Activated CD4-positive, alpha-beta memory T cell treated with anti-CD3 and anti-CD28 coated beads for 36 hours (primary cell): ENCODE measurements at regions of chr11 and their contacts with region 1.

Region 1: GRCh38 chr11:6377902-6378639 is 12.2 kb upstream of the SMPD1 start:
- DNase-seq: no peak
- H3K4me3 Mint-ChIP-seq: no peak overlapping the region
- H3K27ac Mint-ChIP-seq: peak overlapping the region; percentile 25
- H3K4me1 Mint-ChIP-seq: peaks cover 23% of the 10 kb centered on the region
- H3K27me3 Mint-ChIP-seq: no peaks in the 10 kb centered on the region

Region 2: DNA sequence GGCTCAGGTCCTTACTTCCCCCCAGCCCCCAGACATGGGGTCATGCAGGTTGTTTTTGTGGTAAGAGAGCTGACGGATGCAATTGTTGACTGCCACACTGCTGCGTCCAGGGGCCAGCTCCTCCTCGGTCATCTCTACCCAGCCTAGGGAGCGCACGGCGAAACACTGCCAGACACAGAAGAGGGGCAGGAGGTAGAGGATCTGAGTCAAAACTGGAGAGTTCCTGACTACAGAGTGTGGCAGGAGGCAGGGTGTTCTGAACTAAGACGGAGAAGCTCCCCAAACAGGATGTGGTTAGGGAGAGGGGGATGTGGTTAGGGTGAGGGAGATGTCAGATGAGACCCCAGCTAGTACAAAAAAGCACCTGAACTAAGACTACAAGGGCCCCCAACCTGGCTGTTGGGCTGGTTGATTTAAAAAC is 24.5 kb after region 1 on chr11:
- CTCF ChIA-PET with region 1: interaction called, 36 read pairs
- POLR2A ChIA-PET with region 1: interaction called, 4 read pairs
- intact Hi-C with region 1: no loop called
- DNase-seq: peak; percentile 88
- H3K4me3 Mint-ChIP-seq: peak overlapping the region; percentile 55
- H3K27ac Mint-ChIP-seq: peak overlapping the region; percentile 90
- H3K4me1 Mint-ChIP-seq: peaks cover 71% of the 10 kb centered on the region
- H3K27me3 Mint-ChIP-seq: no peaks in the 10 kb centered on the region

Region 3: GRCh38 chr11:6431861-6432260 is 53.8 kb after region 1 on chr11:
- CTCF ChIA-PET with region 1: interaction called, 59 read pairs
- POLR2A ChIA-PET with region 1: no interaction called
- intact Hi-C with region 1: no loop called
- DNase-seq: no peak
- H3K4me3 Mint-ChIP-seq: no peak overlapping the region
- H3K27ac Mint-ChIP-seq: no peak overlapping the region
- H3K4me1 Mint-ChIP-seq: no peaks in the 10 kb centered on the region
- H3K27me3 Mint-ChIP-seq: no peaks in the 10 kb centered on the region

Region 4: DNA sequence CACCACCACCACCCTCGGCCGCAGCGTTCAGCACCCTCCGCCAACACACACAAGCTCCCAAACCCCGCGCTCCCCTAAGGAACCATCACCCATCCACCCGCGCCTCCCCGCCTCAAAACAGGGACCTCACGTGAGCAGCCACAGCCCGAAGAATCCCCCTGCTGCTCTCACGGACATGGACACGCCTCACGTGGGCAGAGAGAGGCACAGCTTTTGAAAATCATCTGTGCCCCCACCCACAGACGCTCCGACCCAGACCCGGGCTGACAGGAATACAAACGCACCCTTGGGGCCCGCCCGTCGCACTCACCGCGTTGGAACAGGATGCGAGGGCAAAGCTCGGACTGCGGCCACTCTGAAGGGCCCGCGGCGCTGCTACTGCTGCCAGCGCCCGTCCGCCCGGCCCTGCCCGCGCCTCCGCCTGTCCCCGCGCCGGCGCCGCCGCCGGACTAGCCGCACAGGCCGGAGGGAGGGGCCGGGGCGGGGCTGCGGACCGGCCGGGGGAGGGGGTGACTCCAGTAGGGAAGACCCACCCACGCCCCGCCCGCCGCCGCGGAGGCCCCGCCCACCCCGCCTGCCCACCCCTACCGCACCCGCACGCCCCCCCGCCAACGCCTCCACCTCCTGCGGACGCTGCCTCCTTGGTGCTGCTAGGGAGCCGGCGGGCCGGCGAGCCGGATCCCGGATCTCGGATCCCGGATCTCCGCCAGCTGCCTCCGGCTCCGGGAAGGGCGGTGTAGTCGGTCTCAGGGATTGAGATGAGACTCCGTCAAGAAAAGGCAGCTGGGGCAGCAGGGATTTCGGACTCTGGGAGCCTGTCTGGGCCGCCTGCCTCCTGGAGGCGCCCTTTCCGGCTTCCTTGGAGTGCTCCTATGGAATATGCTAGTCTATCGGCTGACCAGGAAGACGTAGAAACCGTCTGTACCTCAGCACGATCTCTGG is 95.7 kb after region 1 on chr11 and contains the start of gene TRIM3:
- CTCF ChIA-PET with region 1: interaction called, 45 read pairs
- POLR2A ChIA-PET with region 1: interaction called, 3 read pairs
- intact Hi-C with region 1: no loop called
- DNase-seq: peak; percentile 75
- H3K4me3 Mint-ChIP-seq: peak within 1 kb of the TSS; percentile 80
- H3K27ac Mint-ChIP-seq: peak within 1 kb of the TSS; percentile 31
- H3K4me1 Mint-ChIP-seq: peaks cover 24% of the 10 kb centered on the region
- H3K27me3 Mint-ChIP-seq: no peaks in the 10 kb centered on the region
- total RNA-seq, gene TRIM3: 6.4 to 8.0 TPM

Region 5: DNA sequence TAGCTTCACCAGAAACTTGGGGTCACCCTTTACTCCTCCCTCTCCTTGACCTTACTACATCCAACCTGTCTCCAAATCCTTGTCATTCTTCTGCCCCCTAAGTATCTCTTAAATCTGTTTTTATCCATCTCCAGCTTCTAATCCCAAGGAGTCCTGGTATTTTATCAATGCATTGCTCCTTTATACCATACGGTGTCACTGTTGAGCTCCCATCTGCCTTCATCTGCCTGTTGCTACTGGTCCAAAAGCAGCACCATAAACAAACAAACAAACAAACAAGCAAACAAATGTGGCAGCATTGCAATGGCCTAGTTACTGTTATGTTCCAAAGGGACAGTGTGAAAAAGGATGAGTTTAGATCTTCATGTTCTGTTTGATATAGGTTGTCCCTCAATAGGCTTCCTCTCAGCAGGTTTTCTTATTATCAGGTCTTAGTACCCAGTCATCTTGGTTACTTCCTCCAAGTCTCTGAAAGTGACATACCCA is 153.2 kb after region 1 on chr11:
- CTCF ChIA-PET with region 1: interaction called, 23 read pairs
- POLR2A ChIA-PET with region 1: no interaction called
- intact Hi-C with region 1: no loop called
- DNase-seq: no peak
- H3K4me3 Mint-ChIP-seq: no peak overlapping the region
- H3K27ac Mint-ChIP-seq: no peak overlapping the region
- H3K4me1 Mint-ChIP-seq: peaks cover 11% of the 10 kb centered on the region
- H3K27me3 Mint-ChIP-seq: no peaks in the 10 kb centered on the region

Region 6: GRCh38 chr11:6682936-6683861 is 305.1 kb after region 1 on chr11 and contains the start of gene MRPL17:
- CTCF ChIA-PET with region 1: interaction called, 6 read pairs
- POLR2A ChIA-PET with region 1: no interaction called
- intact Hi-C with region 1: loop called (anchors 5 kb)
- DNase-seq: peak; percentile 100
- H3K4me3 Mint-ChIP-seq: peak within 1 kb of the TSS; percentile 99
- H3K27ac Mint-ChIP-seq: peak within 1 kb of the TSS; percentile 95
- H3K4me1 Mint-ChIP-seq: peaks cover 36% of the 10 kb centered on the region
- H3K27me3 Mint-ChIP-seq: no peaks in the 10 kb centered on the region
- total RNA-seq, gene MRPL17: 98.5 to 102 TPM

Region 7: GRCh38 chr11:6757373-6757967 is 379.4 kb after region 1 on chr11:
- CTCF ChIA-PET with region 1: interaction called, 12 read pairs
- POLR2A ChIA-PET with region 1: no interaction called
- intact Hi-C with region 1: loop called (anchors 2 kb)
- DNase-seq: peak; percentile 74
- H3K4me3 Mint-ChIP-seq: no peak overlapping the region
- H3K27ac Mint-ChIP-seq: no peak overlapping the region
- H3K4me1 Mint-ChIP-seq: peaks cover 6% of the 10 kb centered on the region
- H3K27me3 Mint-ChIP-seq: peaks cover 1% of the 10 kb centered on the region

Region 8: GRCh38 chr11:7154881-7155361 is 776.9 kb after region 1 on chr11:
- CTCF ChIA-PET with region 1: no interaction called
- POLR2A ChIA-PET with region 1: no interaction called
- intact Hi-C with region 1: no loop called
- DNase-seq: no peak
- H3K4me3 Mint-ChIP-seq: no peak overlapping the region
- H3K27ac Mint-ChIP-seq: no peak overlapping the region
- H3K4me1 Mint-ChIP-seq: no peaks in the 10 kb centered on the region
- H3K27me3 Mint-ChIP-seq: peaks cover 2% of the 10 kb centered on the region